A549 (cell line): ENCODE measurements at regions of chr16 and their contacts with region 1.

Region 1: DNA sequence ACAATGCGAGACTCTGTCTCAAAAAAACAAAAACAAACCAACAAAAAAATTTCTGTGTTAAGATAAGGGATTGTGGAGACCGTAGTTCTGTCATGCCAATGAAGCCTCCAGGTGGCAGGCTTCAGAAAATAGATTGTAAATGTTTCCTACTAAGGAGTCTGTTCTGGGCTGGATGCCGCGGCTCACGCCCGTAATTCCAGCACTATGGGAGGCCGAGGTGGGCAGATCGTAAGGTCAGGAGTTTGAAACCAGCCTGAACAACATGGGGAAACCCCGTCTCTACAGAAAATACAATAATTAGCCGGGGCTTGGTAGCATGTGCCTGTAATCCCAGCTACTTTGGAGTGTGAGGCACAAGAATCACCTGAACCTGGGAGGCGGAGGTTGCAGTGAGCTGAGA is 4.4 kb upstream of the SNX29 start:
- DNase-seq: peak in 1 of 2 experiments; percentile 50
- ATAC-seq: peak; percentile 46 to 53; a peak in 3 of 6 replicates
- H3K4me3 ChIP-seq: no peak overlapping the region
- H3K27ac ChIP-seq: no peak overlapping the region
- H3K4me1 ChIP-seq: peaks cover 3% of the 10 kb centered on the region; the same call in 1 of the 3 replicates
- CTCF ChIP-seq: peak; percentile 31; the same call in 2 of the 3 replicates
- EP300 ChIP-seq: no peak
- POLR2A ChIP-seq: no peak
- RAD21 ChIP-seq: peak; percentile 27 to 30; a peak in 3 of 5 replicates

Region 2: DNA sequence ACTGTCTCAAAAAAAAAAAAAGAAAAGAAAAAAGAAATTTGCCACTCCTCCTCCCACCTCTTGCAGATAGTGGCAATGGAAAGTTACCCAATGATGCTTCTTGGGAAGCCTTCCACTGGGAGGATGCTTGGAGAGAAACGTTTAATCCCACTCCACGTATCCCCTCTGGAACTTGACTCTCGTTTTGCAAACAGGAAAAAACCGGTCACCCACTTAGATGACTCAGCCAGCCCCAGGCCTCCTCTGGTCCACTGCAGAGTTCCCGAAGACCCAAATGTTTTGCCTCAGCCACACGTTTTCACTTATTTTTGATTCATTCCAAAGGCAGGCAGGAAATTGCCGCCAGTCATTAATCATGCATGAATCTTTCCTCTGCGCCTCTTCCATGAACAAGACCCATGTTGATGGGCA is 16.4 kb before region 1 on chr16:
- CTCF ChIA-PET with region 1: interaction called, 10 read pairs
- POLR2A ChIA-PET with region 1: interaction called, 8 read pairs
- DNase-seq: peak in 1 of 2 experiments; percentile 12
- ATAC-seq: peak; percentile 43 to 54; a peak in 5 of 6 replicates
- H3K4me3 ChIP-seq: no peak overlapping the region
- H3K27ac ChIP-seq: peak overlapping the region in 1 of 2 experiments; percentile 27; a peak in 1 of 6 replicates
- H3K4me1 ChIP-seq: 0 out of 3 replicates have a peak, but pooled peaks cover 3% of the 10 kb centered on the region
- CTCF ChIP-seq: no peak
- EP300 ChIP-seq: no peak
- POLR2A ChIP-seq: no peak
- RAD21 ChIP-seq: no peak

Region 3: DNA sequence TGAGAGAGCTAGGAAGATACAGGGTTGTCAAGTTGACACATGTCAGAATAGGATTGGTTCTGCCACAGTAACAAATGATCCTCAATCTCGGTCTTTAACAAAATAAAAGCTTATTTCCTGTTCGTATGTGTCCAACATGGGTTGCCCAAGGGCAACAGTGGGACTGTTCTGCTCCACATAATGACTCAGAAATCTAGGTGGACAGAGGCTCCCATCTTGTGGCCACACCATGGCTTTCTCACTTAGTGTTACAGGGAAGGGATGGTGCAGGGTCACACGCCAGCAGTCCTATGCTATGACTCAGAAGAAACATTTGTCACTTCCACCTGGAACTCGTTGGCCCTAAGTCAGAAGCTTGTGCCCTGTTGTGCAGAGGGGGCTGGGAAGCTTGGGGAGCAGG is 369.3 kb after region 1 on chr16:
- CTCF ChIA-PET with region 1: no interaction called
- POLR2A ChIA-PET with region 1: interaction called, 11 read pairs
- DNase-seq: peak in 1 of 2 experiments; percentile 46
- ATAC-seq: peak; percentile 67 to 71
- H3K4me3 ChIP-seq: no peak overlapping the region
- H3K27ac ChIP-seq: peak overlapping the region in 1 of 2 experiments; percentile 26; a peak in 1 of 6 replicates
- H3K4me1 ChIP-seq: peaks cover 18% of the 10 kb centered on the region
- CTCF ChIP-seq: no peak
- EP300 ChIP-seq: no peak
- POLR2A ChIP-seq: no peak
- RAD21 ChIP-seq: peak; percentile 8 to 42; a peak in 3 of 5 replicates